Head of caudate nucleus (tissue), 42 donors: ENCODE measurements at regions of chr3 and their contacts with region 1.

Region 1: DNA sequence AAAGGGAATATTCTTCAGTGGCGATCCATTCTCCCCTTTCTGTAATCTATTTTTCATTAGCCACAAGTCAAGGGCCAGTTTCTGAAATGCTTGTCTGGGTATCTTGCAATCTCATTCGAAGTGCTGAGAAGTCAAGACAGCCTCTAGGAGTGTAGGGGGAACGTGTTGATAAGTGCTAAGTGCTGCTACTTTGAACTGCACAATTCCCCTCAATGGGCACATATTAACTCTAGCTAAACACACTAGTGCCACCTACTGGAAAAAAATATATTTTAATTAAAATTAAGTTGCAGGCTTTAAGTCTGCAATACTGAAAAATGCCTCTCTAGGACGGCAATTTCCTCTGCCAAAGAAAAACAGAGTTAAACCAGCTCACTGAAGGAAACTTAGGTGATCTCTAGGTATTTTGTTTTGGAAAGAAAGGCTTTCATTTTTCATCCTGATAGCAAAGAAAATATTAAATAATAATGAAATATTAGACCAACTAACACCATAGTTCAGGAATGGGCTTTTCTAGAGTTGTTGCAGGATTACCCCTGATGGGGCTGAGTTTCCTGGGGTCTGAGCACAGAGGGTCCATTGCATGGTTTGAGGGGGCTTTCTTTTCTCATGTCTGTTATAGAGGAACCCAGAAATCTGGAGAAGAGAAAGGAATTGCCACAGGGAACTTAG is 181.9 kb upstream of the KBTBD8 start:
- DNase-seq: peak in 2 of 42 donors; percentile 18 to 32

Region 2: DNA sequence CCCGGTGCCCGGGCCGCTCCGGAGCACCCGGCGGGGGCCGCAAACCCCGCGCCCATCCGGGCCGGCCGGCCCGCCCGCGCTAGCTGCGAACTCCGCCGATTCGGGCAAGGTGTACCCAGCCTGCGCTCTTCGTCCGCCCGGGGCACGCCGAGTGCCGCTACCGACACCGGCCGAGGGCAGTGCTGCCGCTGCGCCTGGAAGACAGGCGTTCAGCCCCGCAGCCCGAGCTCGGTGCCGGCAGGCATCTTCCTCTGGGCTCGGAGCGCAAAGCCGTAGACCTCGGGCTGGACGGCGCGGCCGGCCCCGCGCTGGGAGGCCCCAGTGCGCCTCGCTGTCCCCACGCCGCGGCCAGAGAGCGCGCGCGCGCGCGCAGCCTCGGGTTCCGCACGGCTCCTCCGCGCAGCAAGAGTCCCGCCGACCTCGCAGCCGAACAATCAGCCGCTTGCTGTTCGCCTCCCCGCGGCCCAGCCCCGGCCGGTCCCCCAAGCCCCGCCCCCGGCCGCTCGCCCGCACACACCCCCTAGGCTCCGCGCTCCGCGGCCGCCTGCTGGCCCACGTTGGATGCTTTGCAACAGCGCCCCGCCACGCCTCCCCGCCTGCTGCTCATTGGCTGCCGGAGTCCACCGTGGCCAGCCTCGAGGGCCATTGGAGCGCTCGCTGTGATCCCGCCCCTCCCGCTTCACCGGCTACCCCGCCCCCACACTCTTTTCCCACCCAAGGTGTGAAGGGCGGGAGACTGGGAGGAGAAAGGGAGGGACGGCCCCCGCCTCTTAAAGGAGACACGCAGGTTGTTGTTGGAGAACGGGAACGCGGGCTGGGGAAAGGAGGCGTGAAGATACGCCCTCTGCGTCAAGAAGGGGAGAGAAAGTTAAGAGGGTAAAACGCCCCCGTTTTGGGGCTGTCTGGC is 315.4 kb before region 1 on chr3 and contains the start of gene LRIG1:
- intact Hi-C with region 1: loop called (anchors 10 kb)
- DNase-seq: peak; percentile 98 to 100 (median 99)

Region 3: GRCh38 chr3:66762916-66763710 is 53.1 kb before region 1 on chr3:
- intact Hi-C with region 1: no loop called
- DNase-seq: peak in 9 of 42 donors; percentile 4 to 62 (median 14)